ENCODE measurements at regions of chr10 and their contacts with region 1.

Region 1: GRCh38 chr10:5502903-5503835 is 3.8 kb upstream of the CALML5 start:
- DNase-seq: peak; percentile 77
- H3K4me3 Mint-ChIP-seq: peak overlapping the region; percentile 12
- H3K27ac Mint-ChIP-seq: peak overlapping the region; percentile 62
- H3K4me1 Mint-ChIP-seq: peaks cover 42% of the 10 kb centered on the region
- H3K27me3 Mint-ChIP-seq: no peaks in the 10 kb centered on the region
- CTCF ChIP-seq: no peak

Region 2: DNA sequence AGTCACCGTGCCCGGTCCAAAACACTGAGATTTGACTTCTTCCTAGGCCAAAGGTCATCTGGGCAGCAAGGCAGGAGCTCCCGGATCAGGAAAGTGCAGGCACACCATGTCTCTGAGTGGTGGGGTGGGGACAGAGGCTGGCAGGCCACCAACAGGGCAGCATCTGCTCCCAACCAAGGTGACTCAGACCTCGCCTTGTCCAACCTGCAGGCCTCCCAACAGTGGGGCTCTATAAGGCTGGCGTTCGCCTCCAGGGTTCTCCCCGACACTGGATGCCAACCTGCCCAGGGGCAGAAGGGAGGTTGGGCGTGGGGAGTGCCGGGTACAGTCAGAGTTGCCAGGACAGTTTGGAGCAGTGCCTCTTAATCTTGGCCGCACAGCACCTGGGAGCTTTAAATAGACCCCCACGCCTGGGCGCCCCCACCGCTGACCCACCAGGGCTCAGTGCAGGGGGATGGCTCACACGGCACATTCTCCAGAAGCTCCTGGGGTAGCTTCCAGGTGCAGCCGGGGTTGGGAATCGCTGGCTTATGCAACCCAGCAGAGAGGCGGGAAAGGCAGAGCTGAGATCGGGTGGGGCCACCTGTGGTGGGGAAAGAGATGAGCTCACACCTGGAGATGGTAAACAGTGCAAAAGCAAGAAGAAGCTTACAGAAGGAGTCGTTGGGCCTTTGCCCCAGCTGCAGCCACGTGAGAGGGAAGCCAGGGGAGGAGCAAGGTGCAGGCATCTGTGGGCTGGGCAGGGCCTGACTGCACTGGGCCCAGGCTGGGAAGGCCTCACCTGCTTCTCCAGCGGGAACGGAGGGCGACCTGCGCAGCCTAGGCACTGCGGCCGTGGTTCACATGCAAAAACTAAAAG is 14.6 kb before region 1 on chr10:
- CTCF ChIA-PET with region 1: no interaction called
- intact Hi-C with region 1: loop called (anchors 1 kb)
- DNase-seq: peak; percentile 21
- H3K4me3 Mint-ChIP-seq: no peak overlapping the region
- H3K27ac Mint-ChIP-seq: peak overlapping the region; percentile 53
- H3K4me1 Mint-ChIP-seq: peaks cover 9% of the 10 kb centered on the region
- H3K27me3 Mint-ChIP-seq: no peaks in the 10 kb centered on the region
- CTCF ChIP-seq: no peak

Region 3: GRCh38 chr10:5645375-5645774 is 142.2 kb after region 1 on chr10:
- CTCF ChIA-PET with region 1: no interaction called
- intact Hi-C with region 1: no loop called
- DNase-seq: no peak
- H3K4me3 Mint-ChIP-seq: no peak overlapping the region
- H3K27ac Mint-ChIP-seq: no peak overlapping the region
- H3K4me1 Mint-ChIP-seq: no peaks in the 10 kb centered on the region
- H3K27me3 Mint-ChIP-seq: no peaks in the 10 kb centered on the region
- CTCF ChIP-seq: no peak